Ascending aorta (tissue), 2 donors: ENCODE measurements at regions of chr2 and their contacts with region 1.

Region 1: GRCh38 chr2:71503837-71504236 is 50.5 kb downstream of the DYSF start:
- DNase-seq: no peak
- H3K4me3 ChIP-seq: no peak overlapping the region
- H3K27ac ChIP-seq: peak overlapping the region in 1 of 2 donors; percentile 38
- H3K4me1 ChIP-seq: peaks cover 0 to 14% of the 10 kb centered on the region in 2 donors
- H3K27me3 ChIP-seq: no peaks in the 10 kb centered on the region
- CTCF ChIP-seq: no peak

Region 2: DNA sequence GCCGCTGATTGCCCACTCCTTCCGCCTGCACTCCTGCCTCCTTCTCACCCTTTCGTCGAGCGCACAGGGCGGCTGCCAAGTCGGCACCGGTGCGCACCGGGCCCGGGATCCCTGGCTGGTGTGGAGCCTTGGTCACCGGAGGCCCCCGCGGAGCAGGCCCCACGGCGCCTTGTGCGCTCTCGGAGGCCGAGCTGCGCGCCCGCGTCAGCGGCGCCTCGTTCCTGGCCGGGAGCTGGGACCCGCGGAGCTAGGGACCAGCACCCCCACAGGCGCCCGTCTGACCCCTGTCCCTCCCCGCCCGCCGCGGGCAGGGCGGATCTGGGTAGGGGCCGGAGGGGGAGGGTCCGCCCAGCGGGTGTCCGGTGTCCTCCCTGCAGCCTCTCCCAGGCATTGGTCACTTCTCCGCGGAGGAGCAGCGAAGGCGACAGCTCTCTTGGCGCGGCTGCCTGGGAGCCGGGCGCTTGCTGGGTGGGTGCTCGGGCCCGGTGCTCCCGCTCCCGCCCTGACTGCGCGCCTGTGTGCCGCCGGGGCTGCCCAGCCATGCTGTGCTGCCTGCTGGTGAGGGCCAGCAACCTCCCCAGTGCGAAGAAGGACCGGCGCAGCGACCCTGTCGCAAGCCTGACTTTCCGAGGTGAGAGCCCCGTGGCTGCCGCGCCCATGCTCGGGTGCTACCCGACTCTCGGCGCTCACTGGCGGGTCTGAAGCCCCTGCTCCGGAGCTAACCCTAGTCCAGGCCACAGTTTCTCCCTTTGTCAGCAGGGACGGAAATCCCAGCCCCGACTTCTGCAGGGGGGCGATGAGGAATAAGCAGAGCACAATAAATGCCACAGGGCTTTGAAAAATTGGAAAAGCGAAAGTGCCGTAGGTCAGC is 37.3 kb before region 1 on chr2:
- intact Hi-C with region 1: loop called (anchors 5 kb)
- DNase-seq: peak in 1 of 2 donors; percentile 69
- H3K4me3 ChIP-seq: peak overlapping the region; percentile 76 to 85
- H3K27ac ChIP-seq: peak overlapping the region in 1 of 2 donors; percentile 19
- H3K4me1 ChIP-seq: peaks cover 0 to 13% of the 10 kb centered on the region in 2 donors
- H3K27me3 ChIP-seq: no peaks in the 10 kb centered on the region
- CTCF ChIP-seq: no peak

Region 3: DNA sequence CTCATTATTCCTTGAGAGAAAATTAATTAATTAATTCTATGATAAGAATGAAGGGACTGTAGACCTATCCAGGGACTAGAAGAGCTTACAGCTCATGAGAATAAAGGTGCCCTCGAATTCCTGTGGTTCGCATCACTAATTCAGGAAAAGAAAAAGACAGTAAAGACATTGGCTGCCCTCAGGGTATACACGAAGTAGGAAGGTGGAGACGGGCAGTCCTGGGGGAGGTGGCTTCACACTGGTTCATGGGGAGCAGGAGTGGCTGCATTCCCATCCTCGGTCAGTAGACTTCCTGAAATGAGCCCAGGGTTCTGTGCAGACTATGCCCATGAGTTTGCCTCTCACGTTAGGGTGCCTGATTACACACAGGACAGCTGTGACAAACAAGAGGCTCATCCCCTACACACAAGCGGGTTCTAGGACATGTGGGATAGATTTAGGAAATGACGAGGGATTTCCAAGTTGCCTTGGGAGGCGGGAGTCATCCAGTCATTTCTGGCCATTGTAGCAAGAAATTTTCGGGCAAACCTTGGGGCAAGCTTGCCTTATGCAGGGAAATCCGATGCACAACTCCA is 361.6 kb after region 1 on chr2:
- intact Hi-C with region 1: no loop called
- DNase-seq: no peak
- H3K4me3 ChIP-seq: no peak overlapping the region
- H3K27ac ChIP-seq: no peak overlapping the region
- H3K4me1 ChIP-seq: no peaks in the 10 kb centered on the region
- H3K27me3 ChIP-seq: no peaks in the 10 kb centered on the region
- CTCF ChIP-seq: no peak